ENCODE measurements at regions of chr1 and their contacts with region 1.

Region 1: GRCh38 chr1:224513787-224514209 is 79.2 kb upstream of the WDR26 start:
- DNase-seq: no peak
- H3K4me3 ChIP-seq: no peak overlapping the region
- CTCF ChIP-seq: peak; percentile 97

Region 2: GRCh38 chr1:224447251-224447650 is 66.5 kb before region 1 on chr1:
- CTCF ChIA-PET with region 1: no interaction called
- POLR2A ChIA-PET with region 1: no interaction called
- DNase-seq: no peak
- H3K4me3 ChIP-seq: no peak overlapping the region
- CTCF ChIP-seq: no peak

Region 3: GRCh38 chr1:224542783-224543440 is 29.1 kb after region 1 on chr1:
- CTCF ChIA-PET with region 1: interaction called, 24 read pairs
- POLR2A ChIA-PET with region 1: no interaction called
- DNase-seq: peak; percentile 90
- H3K4me3 ChIP-seq: peak overlapping the region; percentile 26; the same call in 1 of the 2 replicates
- CTCF ChIP-seq: no peak

Region 4: GRCh38 chr1:224644553-224645154 is 130.9 kb after region 1 on chr1:
- CTCF ChIA-PET with region 1: interaction called, 175 read pairs
- POLR2A ChIA-PET with region 1: no interaction called
- DNase-seq: no peak
- H3K4me3 ChIP-seq: no peak overlapping the region
- CTCF ChIP-seq: peak; percentile 80

Region 5: GRCh38 chr1:224846119-224846907 is 332.5 kb after region 1 on chr1:
- CTCF ChIA-PET with region 1: interaction called, 511 read pairs
- POLR2A ChIA-PET with region 1: no interaction called
- DNase-seq: no peak
- H3K4me3 ChIP-seq: no peak overlapping the region
- CTCF ChIP-seq: no peak

Region 6: GRCh38 chr1:224894918-224895317 is 381.1 kb after region 1 on chr1:
- CTCF ChIA-PET with region 1: interaction called, 82 read pairs
- POLR2A ChIA-PET with region 1: no interaction called
- DNase-seq: no peak
- H3K4me3 ChIP-seq: no peak overlapping the region
- CTCF ChIP-seq: peak; percentile 33